ENCODE measurements at regions of chr12 and their contacts with region 1.

Region 1: GRCh38 chr12:94101738-94102660 is 46.4 kb upstream of the PLXNC1 start:
- DNase-seq: peak; percentile 95
- H3K4me3 ChIP-seq: peak overlapping the region; percentile 53 to 90 (median 64)
- H3K27ac ChIP-seq: peak overlapping the region in 6 of 8 donors; percentile 7 to 76 (median 52)
- H3K4me1 ChIP-seq: peaks cover 3 to 25% (median 20%) of the 10 kb centered on the region in 6 donors
- H3K27me3 ChIP-seq: peaks cover 0 to 35% (median 10%) of the 10 kb centered on the region in 7 donors
- CTCF ChIP-seq: peak; percentile 77 to 91 (median 87)
- POLR2A ChIP-seq: no peak

Region 2: GRCh38 chr12:92784795-92785562 is 1317.0 kb before region 1 on chr12:
- intact Hi-C with region 1: loop called (anchors 10 kb)
- DNase-seq: no peak
- H3K4me3 ChIP-seq: no peak overlapping the region
- H3K27ac ChIP-seq: no peak overlapping the region
- H3K4me1 ChIP-seq: peaks cover 0 to 12% (median 0%) of the 10 kb centered on the region in 6 donors
- H3K27me3 ChIP-seq: no peaks in the 10 kb centered on the region
- CTCF ChIP-seq: peak in 9 of 11 experiments; percentile 19 to 61 (median 57)
- POLR2A ChIP-seq: no peak

Region 3: DNA sequence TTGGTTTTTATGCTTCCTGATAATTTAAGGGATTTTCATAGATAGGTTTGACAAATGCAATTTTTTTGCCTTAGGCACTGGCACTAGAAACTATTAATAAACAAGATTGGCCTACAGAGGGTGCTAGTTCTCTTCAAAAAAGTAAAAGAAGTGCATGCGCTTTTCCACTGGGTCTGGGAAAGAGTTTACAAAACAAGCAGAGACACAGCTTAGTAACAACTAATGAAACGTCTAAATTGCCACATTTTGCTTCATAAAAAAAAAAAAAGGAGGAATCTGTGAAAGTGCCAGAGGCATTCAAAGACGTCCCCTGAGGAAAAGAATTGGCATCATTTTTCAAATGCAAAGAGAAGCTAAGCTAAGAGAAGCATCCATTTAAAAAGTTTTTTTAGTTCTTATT is 1114.6 kb before region 1 on chr12:
- intact Hi-C with region 1: loop called (anchors 10 kb)
- DNase-seq: no peak
- H3K4me3 ChIP-seq: peak overlapping the region in 1 of 8 donors; percentile 19
- H3K27ac ChIP-seq: peak overlapping the region; percentile 23 to 85 (median 75)
- H3K4me1 ChIP-seq: peaks cover 5 to 22% (median 18%) of the 10 kb centered on the region in 6 donors
- H3K27me3 ChIP-seq: no peaks in the 10 kb centered on the region
- CTCF ChIP-seq: peak; percentile 14 to 79 (median 64)
- POLR2A ChIP-seq: no peak

Region 4: GRCh38 chr12:93502802-93503623 is 599.0 kb before region 1 on chr12:
- intact Hi-C with region 1: loop called (anchors 5 kb)
- DNase-seq: no peak
- H3K4me3 ChIP-seq: no peak overlapping the region
- H3K27ac ChIP-seq: no peak overlapping the region
- H3K4me1 ChIP-seq: peaks cover 0 to 5% (median 0%) of the 10 kb centered on the region in 6 donors
- H3K27me3 ChIP-seq: no peaks in the 10 kb centered on the region
- CTCF ChIP-seq: peak in 10 of 11 experiments; percentile 48 to 75 (median 65)
- POLR2A ChIP-seq: no peak

Region 5: GRCh38 chr12:93569656-93570551 is 532.1 kb before region 1 on chr12:
- intact Hi-C with region 1: loop called (anchors 5 kb)
- DNase-seq: peak; percentile 92
- H3K4me3 ChIP-seq: peak overlapping the region; percentile 70 to 96 (median 84)
- H3K27ac ChIP-seq: peak overlapping the region; percentile 71 to 92 (median 90)
- H3K4me1 ChIP-seq: peaks cover 12 to 62% (median 41%) of the 10 kb centered on the region in 6 donors
- H3K27me3 ChIP-seq: peaks cover 0 to 63% (median 19%) of the 10 kb centered on the region in 7 donors
- CTCF ChIP-seq: peak; percentile 10 to 87 (median 73)
- POLR2A ChIP-seq: no peak